ENCODE measurements at regions of chr14 and their contacts with region 1.

Region 1: DNA sequence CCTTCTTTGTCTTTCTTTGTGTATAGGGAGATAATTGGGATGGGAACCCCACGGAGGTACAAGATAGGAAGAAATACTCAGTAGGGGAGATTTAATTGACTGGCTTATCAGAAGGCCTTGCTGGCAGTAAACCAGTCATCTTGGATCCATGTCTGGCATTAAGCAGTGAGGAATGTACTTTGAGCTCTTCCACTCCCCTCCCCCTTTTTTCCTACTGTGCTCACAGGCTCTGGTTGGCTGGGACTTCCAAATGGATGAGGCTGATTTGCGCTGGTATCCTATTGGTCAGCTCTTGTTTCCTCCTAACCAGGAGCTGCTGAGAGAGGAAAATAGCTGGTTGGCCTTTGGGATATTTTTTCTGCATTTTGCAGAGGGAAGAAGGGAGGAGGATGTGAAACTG is 24.7 kb downstream of the NGDN start:
- DNase-seq: no peak
- CTCF ChIP-seq: no peak

Region 2: DNA sequence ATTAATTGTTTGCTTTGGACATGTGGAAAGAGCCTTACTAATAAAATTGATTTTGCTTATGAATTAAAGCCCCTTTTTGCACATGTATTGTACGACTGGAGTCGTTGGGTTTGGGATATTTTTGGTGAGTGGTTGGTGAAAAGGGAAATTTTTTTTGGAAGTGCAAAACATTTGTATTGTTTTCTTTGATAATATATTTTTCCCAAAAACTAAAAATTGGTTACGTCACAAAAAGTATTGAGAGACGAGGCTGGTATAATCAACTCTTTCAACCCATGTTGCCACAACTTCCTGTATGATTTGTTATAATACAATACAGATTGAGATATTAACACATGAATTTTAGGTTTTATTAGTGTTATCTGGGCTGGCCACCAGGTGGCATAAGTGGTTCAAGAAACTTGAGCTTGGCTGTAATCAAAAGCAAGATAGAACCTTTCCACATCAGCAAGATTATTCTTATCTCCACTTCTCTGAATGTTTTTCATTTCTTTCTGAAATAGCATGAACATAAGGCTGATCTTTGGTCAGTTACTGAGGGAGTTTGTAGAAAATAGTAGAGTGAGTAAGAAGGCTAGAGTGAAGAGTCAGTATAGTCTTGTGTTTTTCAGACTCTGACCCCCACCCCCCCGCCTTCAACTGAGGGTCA is 16.0 kb before region 1 on chr14:
- CTCF ChIA-PET with region 1: interaction called, 30 read pairs
- POLR2A ChIA-PET with region 1: interaction called, 8 read pairs
- DNase-seq: peak; percentile 50
- CTCF ChIP-seq: peak; percentile 60

Region 3: GRCh38 chr14:23483236-23483854 is 10.9 kb before region 1 on chr14:
- CTCF ChIA-PET with region 1: interaction called, 30 read pairs
- POLR2A ChIA-PET with region 1: no interaction called
- DNase-seq: peak; percentile 33
- CTCF ChIP-seq: peak; percentile 31

Region 4: GRCh38 chr14:23512156-23512555 is 17.9 kb after region 1 on chr14:
- CTCF ChIA-PET with region 1: interaction called, 24 read pairs
- POLR2A ChIA-PET with region 1: no interaction called
- DNase-seq: no peak
- CTCF ChIP-seq: no peak